HAP-1 (cell line): ENCODE measurements at regions of chr14 and their contacts with region 1.

Region 1: GRCh38 chr14:68816262-68816942 is 23.5 kb upstream of the ZFP36L1 start:
- DNase-seq: peak; percentile 83 to 93
- H3K4me3 ChIP-seq: peak overlapping the region; percentile 34
- H3K4me1 ChIP-seq: peaks cover 23% of the 10 kb centered on the region
- H3K27me3 ChIP-seq: no peaks in the 10 kb centered on the region

Region 2: DNA sequence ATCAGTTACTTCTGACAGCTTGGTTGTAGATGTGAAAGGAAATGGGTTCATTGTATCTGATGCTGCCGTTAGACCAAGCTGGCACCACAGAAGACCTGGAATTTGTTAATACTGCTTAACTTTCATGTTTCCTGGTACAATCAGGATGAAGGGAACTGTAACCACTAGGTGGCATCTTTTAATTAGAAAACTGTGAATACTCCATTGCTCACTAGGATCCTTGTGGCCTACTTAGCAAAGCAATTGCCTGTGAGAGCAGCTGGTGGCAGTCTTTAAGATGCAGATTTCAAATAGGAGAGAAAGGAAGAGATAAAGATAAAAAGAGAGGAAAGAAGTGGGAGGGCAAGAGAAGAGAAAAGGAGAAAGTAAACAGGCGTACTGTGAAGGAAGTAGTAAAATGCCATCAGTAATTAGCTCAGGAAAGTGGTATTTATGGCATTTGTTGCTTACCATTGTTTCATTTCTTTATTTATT is 882.4 kb before region 1 on chr14:
- in situ Hi-C with region 1: loop called (anchors 5 kb)
- DNase-seq: peak; percentile 60 to 94
- H3K4me3 ChIP-seq: no peak overlapping the region
- H3K4me1 ChIP-seq: peaks cover 22% of the 10 kb centered on the region
- H3K27me3 ChIP-seq: no peaks in the 10 kb centered on the region

Region 3: DNA sequence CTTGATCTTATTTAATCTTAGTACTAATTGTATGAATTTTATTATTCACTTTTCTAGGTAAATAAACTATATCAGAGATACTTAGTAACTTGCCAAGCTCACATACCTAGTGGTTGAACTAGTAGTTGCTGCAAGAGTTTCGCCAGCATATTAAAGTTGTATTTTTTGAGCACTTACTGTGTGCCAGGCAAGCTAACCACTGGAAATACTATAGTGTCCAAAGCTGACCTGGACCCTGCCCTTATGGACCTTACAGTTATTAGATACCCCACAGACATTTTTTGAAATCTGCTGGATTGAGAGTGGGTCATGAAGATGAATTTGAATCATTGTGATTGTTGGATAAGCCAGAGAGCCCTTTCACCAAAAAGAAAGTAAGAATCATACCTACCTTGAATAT is 871.8 kb before region 1 on chr14:
- in situ Hi-C with region 1: no loop called
- DNase-seq: no peak
- H3K4me3 ChIP-seq: no peak overlapping the region
- H3K4me1 ChIP-seq: peaks cover 26% of the 10 kb centered on the region
- H3K27me3 ChIP-seq: no peaks in the 10 kb centered on the region

Region 4: DNA sequence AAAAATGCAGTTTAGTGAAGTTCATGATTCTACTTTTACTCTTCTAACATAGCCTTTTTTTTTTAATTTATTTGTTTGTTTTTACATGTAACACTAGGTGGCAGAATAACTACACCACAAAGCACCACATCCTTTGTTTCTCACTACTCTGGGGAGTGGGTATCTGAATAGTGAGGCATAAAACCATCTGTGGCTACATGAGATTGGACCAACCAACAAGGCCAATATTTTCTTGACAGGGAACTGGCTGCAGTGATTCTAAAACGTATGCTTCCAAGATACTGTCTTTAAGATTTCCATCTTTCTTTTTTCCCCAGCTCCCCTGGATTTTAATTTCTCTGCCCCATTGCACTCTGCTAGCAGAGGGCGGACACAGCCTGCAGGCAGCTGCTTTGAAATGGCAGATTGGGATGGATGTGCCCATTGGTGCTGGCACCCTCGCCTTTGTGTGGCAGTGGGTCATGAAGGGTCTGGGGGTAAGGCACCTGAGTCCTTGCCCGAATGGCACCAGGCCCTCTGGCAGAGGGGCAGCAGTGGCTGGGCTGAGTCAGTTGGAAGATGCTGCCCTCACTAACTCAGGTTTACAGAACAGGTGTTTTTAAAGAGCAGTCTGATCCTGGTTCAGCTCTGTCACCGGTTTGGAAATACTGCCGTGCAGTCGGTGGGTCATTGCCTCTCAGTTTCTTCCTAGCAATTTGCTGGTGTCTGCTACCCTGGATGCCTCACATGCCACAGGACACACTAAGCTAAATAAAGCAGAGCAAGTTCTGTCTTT is 567.7 kb before region 1 on chr14:
- in situ Hi-C with region 1: loop called (anchors 10 kb)
- DNase-seq: peak; percentile 26 to 77
- H3K4me3 ChIP-seq: no peak overlapping the region
- H3K4me1 ChIP-seq: peaks cover 92% of the 10 kb centered on the region
- H3K27me3 ChIP-seq: no peaks in the 10 kb centered on the region

Region 5: GRCh38 chr14:68695326-68695768 is 121.1 kb before region 1 on chr14:
- in situ Hi-C with region 1: no loop called
- DNase-seq: no peak
- H3K4me3 ChIP-seq: no peak overlapping the region
- H3K4me1 ChIP-seq: no peaks in the 10 kb centered on the region
- H3K27me3 ChIP-seq: no peaks in the 10 kb centered on the region; the same call in 1 of the 2 replicates

Region 6: DNA sequence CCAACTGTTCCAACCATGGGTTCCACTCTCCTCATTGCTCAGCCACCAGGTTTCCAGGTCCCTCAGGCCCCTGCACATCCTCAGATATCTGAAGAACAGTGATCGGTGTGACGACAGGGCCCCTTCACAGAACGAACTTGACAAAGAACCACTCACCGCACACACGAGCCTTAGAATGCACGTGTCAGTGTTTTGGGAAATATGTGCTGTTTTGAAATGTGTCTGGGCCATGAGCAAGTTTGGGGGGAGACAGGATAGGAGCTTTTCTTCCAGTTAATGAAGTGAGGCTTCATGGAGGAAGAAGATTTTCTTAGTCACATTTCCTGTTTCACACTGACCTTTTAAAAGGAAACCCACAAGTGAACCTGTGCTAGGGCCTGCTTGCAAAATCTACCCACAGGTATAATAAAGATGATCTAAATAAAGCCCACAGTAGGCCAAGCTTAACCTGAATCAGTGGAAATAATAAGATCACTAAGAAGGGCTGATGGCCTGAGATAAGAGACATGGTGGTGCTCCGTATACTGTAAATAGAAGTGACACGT is 82.1 kb before region 1 on chr14:
- in situ Hi-C with region 1: no loop called
- DNase-seq: no peak
- H3K4me3 ChIP-seq: no peak overlapping the region
- H3K4me1 ChIP-seq: no peaks in the 10 kb centered on the region
- H3K27me3 ChIP-seq: no peaks in the 10 kb centered on the region